Panc1 (cell line): ENCODE measurements at regions of chr19 and their contacts with region 1.

Region 1: GRCh38 chr19:4867534-4868285 is at the start of gene PLIN3:
- DNase-seq: peak; percentile 76
- ATAC-seq: peak; percentile 88
- H3K4me3 ChIP-seq: peak within 1 kb of the TSS; percentile 75 to 86
- H3K27ac ChIP-seq: peak within 1 kb of the TSS; percentile 89
- H3K4me1 ChIP-seq: peaks cover 14% of the 10 kb centered on the region
- H3K27me3 ChIP-seq: no peaks in the 10 kb centered on the region
- CTCF ChIP-seq: no peak
- total RNA-seq, gene PLIN3: 157 TPM

Region 2: DNA sequence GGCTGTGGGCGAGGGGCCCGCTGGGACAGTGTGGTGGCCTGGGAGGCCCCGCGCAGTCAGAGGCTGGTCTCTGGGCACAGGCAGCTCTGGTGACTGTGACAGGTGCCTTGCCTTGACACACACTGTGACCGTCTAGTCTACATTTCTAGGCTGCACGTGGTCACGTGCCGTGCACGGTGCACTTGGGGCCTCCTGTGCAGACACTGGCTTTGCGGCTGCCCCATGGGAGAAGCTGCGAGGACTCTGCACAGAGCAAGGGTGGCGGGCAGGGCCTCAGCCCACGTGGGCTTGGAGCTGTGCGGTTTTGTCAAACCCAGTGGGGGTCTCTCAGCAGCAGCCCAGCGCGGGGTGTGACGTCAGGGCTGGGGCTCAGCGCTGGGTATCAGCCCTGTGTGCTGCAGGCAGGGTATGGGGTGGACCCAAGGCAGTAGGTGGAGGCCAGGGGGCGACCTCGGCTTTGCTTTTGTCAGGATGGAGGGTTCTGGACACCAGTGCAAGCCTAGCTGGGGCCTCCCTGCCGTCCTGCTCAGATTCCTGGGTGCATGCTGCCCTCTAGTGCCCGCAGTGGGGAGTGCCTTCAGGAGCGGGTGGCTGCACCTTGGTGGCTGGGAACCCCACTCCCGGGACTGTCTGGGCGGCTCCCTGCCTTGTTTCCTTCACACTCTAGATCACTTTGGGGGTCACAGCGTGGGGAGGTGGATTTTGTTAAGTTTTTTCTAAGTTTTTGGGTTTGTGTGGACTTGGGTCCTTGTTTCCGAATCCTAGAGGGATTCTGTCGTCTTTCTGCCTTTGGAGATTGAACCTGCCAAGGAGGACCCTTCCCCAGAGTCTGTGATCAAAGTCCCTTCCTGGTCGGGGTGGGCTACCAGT is 163.8 kb after region 1 on chr19:
- CTCF ChIA-PET with region 1: no interaction called
- POLR2A ChIA-PET with region 1: interaction called, 7 read pairs
- in situ Hi-C with region 1: no loop called
- intact Hi-C with region 1: loop called (anchors 5 kb)
- DNase-seq: peak; percentile 50
- ATAC-seq: peak; percentile 92
- H3K4me3 ChIP-seq: no peak overlapping the region
- H3K27ac ChIP-seq: no peak overlapping the region
- H3K4me1 ChIP-seq: no peaks in the 10 kb centered on the region
- H3K27me3 ChIP-seq: no peaks in the 10 kb centered on the region
- CTCF ChIP-seq: peak; percentile 88